ENCODE measurements at regions of chr7 and their contacts with region 1.

Region 1: DNA sequence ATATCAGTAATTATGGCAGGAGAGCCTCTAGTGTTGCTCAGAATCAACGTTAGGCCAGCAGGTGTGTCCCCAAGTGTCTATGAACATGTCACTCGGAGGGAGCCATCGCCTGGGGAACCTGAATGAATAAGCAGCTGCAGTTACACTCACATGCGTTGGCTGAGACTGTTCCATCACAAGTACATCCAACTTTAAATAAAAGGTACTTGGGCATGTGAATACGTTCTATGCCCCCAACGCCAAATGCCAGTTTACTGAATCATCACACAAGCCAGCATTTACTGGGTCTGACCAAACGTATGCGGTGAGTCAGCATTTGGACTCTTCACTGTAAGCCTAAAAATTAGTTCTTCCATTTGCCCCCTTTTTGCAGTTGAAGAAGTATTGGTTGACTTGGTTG is 207.6 kb upstream of the PLXNA4 start:
- DNase-seq: peak; percentile 80
- H3K4me3 ChIP-seq: no peak overlapping the region
- H3K27ac ChIP-seq: 0 out of 2 replicates have a peak overlapping the region, but pooled peaks have one; percentile 6
- H3K4me1 ChIP-seq: peaks cover 23% of the 10 kb centered on the region
- H3K27me3 ChIP-seq: no peaks in the 10 kb centered on the region

Region 2: GRCh38 chr7:132575419-132575981 is 208.3 kb before region 1 on chr7:
- in situ Hi-C with region 1: no loop called
- DNase-seq: peak; percentile 73
- H3K4me3 ChIP-seq: peak overlapping the region; percentile 44; the same call in 1 of the 2 replicates
- H3K27ac ChIP-seq: no peak overlapping the region
- H3K4me1 ChIP-seq: no peaks in the 10 kb centered on the region
- H3K27me3 ChIP-seq: peaks cover 65% of the 10 kb centered on the region

Region 3: DNA sequence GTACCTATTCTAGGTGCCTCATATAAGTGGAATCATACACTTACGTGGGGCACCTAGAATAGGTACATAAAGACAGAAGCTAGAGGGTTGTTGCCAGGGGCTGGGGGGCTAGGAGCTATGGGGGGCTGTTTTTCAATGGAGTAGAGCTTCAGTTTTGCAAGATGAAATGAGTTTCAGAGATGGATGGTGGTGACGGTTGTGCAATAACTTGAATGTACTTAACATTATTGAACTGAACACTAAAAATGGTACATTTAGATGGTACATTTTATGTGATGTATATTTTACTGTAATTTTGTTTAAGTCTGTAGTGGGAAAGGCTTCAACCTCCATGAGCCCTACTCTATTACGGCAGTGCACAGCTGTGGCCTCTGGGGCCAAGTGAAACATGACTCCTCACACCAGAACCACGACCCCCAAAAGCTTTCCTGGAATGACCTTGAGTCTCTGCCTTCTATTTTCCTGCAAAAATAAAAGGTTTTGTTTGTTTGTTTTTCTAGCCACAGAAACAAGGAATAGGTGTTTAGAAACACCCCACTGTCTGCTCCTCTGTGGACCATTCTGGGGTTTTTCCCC is 60.2 kb before region 1 on chr7:
- in situ Hi-C with region 1: loop called (anchors 10 kb)
- DNase-seq: no peak
- H3K4me3 ChIP-seq: no peak overlapping the region
- H3K27ac ChIP-seq: no peak overlapping the region
- H3K4me1 ChIP-seq: no peaks in the 10 kb centered on the region
- H3K27me3 ChIP-seq: peaks cover 30% of the 10 kb centered on the region

Region 4: DNA sequence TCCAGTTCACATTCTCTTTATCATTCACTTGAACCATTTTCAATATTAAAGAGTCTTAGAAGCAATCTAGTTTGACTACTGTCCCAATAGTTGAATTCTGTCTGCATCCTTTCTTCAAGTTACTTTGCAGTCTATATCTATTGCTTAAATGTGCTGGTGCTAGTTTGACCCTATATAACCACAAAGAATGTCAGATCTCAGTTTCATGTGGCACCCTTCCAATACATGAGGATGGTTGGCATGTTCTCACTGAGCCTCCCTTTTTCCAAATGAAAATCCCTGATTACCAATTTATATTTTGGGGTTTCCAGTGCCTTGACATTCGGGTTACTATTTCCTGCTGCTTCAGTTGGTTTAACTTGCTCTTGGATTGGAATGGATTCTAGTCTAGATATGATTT is 761.8 kb after region 1 on chr7:
- in situ Hi-C with region 1: no loop called
- DNase-seq: peak; percentile 25
- H3K4me3 ChIP-seq: no peak overlapping the region
- H3K27ac ChIP-seq: no peak overlapping the region
- H3K4me1 ChIP-seq: 0 out of 2 replicates have a peak, but pooled peaks cover 5% of the 10 kb centered on the region
- H3K27me3 ChIP-seq: no peaks in the 10 kb centered on the region

Measured in GM23248 (cell line).